Right ventricle myocardium inferior (tissue), 1 donor: ENCODE measurements at regions of chr2 and their contacts with region 1.

Region 1: DNA sequence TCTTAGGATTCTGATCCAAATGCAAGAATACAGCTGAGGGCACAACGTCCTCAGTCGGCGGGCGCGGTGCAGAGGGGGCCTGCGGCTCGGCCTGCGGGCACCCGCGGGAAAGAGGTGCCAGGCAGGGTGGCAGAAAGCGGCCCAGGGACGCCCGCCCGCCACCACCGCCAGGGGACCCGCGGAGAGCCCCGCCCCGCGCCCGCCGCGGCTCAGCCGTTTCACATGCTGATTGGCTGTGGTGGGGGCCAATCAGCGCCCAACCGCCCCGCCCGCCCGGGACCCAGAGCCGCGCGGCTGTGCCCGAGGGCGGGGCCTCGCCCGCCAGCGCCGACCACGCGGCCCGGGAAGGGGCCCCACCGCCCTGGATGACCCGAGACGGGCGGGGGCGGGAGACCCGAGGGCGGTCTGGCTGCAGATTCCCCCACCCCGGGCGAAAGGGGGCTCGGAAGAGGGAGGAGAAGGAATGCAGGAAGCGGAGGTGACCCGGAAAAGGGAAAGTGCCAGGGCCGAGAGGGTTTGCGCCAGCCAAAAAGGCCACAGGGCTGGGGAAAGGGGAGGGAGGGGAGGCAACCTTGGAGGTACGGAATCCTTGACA is 8.0 kb downstream of the IRS1 start:
- DNase-seq: peak; percentile 95
- ATAC-seq: peak; percentile 93

Region 2: DNA sequence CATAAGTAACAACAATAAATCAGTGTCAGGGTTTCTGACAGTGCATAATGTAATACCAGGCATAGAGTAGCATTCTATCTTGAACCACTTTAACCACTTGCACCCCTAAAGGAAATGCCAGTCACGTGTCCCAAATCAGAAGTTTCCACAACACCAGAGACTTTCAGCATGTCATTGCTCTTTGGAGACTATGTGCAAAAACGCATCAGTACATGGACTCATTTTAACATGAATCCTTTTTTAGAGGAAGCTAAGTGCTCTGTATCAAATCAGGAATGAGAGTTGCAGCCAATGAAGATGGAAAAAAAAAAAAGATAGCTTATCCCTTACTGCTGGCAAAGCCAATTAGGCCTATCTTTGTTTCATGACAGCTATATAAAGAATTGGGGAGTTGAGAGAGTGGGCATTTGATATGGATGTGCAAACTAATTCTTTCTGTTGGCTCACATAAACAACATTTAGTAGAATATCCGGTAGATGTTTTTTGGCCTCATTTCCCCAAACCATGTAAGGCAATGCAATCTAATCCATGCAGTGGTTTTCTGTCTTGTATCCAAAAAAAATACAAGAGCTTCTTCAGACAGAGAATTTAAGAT is 345.1 kb before region 1 on chr2:
- intact Hi-C with region 1: loop called (anchors 1 kb)
- DNase-seq: no peak
- ATAC-seq: peak; percentile 79

Region 3: DNA sequence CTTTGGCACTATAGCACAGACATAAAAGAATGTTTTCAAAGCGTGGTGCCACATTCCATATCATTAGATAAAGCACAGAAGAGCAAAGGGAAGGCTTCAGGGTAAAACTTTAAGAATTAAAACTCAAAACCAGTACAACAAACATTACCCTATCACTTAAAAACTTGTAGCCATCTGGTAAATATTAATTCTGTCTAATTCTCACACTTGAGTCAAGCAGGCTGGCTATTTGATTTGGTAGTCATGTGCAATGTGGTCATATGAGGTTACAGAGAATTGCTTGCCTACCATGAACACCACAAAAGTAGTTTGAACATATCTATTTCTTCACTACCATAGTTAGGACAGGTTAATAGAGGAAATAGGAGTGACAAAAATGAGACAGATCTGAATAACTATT is 236.9 kb before region 1 on chr2:
- intact Hi-C with region 1: loop called (anchors 5 kb)
- DNase-seq: no peak
- ATAC-seq: no peak

Region 4: DNA sequence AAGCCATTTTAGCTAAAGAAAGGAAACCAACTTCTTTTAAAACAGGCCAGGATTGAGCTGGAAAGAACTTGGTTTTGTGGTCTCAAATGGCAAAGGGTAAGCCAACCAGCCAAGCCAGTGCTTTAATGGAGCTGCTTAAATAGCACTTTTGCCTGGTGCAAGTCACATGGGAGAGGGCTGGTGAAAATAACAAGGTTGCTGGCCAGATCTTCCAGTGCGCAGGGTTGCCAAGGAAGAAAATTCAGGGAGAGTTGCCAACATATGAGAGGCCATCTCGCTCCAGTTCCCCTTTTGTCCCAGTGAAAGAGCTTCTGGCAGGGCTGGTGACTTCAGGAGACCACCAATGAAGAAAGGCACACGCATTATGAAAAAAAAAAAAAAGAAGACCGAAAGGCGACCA is 49.2 kb before region 1 on chr2:
- intact Hi-C with region 1: loop called (anchors 2 kb)
- DNase-seq: peak; percentile 64
- ATAC-seq: peak; percentile 92

Region 5: DNA sequence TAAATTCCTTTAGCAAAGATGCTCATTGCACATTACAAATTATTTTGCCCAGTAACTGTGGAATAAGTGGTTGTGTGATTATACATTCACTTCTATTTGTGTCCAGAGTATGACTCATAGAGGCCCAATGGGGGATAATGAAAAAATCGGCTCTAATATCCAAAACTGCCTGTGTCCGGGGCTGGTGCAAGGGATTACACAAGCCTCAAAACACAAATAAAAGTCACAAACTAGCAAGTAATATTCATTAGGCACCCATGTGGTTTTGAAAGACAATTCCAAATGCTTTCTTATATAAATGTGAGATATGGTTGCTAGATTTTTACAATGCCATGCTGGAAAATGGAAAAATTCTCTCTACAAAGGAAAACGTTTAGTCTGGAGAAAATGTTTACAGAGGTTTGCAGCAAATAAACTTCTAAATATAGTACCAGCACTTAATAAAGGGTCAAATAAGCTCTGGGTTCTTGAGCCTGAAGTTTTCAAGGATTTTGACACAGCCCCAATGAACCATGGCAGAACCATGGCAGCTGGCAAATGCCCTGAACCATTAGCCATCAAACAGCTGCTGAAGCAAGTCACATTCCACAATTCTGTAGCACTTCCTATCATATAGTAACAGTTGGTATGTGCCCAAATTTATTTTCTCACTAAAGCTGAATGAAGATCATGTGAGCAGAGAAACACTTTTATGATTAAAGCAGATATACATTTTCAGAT is 32.5 kb before region 1 on chr2:
- intact Hi-C with region 1: loop called (anchors 5 kb)
- DNase-seq: no peak
- ATAC-seq: peak; percentile 71

Region 6: DNA sequence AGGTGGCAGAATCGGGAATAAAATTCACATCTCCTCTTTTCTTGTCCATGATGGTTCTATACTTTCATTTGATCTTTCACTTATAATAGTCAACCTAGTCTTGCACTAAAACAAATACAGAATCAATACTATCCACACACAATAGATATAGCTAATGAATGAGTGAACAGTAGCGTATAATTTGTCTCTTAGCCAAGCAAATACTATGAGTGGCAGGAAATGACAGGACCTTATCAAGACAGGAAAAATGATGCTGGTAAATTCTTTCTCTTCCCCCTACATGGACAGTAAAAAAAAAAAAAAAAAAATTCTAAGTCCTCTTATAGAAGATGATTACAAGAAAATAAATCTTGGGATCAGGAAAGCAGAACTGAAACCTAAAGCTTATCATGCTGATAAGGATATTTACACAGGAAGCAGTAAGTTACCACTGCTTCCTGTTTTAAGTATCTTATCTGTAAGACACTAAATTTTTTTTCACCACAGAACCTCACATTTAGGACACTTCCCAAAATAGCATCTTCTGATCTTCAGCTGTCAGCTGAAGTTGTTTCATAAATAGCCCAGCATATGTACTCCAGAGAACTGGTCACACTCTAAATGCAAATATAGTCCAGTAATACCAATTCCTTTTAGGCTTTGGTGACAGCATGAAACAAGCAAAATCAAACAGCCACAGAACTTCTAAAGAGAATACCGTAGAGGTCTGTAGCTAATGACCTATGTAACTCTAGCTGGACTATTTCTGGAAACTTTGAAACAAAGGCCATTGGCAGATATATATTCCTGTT is 19.0 kb before region 1 on chr2:
- intact Hi-C with region 1: loop called (anchors 2 kb)
- DNase-seq: no peak
- ATAC-seq: peak; percentile 37